Mammary epithelial cell (primary cell): ENCODE measurements at regions of chr4 and their contacts with region 1.

Region 1: GRCh38 chr4:58254291-58254690 is 1144.1 kb upstream of the IGFBP7 start:
- DNase-seq: no peak
- H3K4me3 ChIP-seq: no peak overlapping the region
- H3K27ac ChIP-seq: no peak overlapping the region
- H3K4me1 ChIP-seq: no peaks in the 10 kb centered on the region
- H3K27me3 ChIP-seq: no peaks in the 10 kb centered on the region
- CTCF ChIP-seq: no peak

Region 2: DNA sequence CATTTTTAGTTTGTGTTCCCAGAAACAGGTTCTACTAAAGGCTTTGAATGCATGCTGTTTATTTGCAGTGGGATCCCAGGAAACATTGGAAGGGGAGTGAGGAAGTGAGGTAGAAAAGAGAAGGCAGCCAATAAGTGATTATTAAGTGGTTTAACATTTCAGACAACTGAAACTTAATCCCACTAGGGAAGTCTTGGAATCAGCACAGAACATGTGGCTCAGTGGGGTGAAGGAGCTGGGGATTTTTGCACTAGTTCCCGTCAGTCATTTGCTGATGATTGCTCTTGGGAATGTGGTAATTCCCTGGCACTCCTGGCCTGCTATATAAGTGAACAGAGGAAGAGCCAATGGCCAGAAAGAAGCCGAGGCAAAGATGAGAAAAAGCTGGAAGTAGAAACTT is 91.1 kb before region 1 on chr4:
- CTCF ChIA-PET with region 1: no interaction called
- dilution Hi-C with region 1: loop called (anchors 5 kb)
- in situ Hi-C with region 1: no loop called
- intact Hi-C with region 1: no loop called
- DNase-seq: no peak
- H3K4me3 ChIP-seq: no peak overlapping the region
- H3K27ac ChIP-seq: no peak overlapping the region
- H3K4me1 ChIP-seq: no peaks in the 10 kb centered on the region
- H3K27me3 ChIP-seq: no peaks in the 10 kb centered on the region
- CTCF ChIP-seq: no peak